ENCODE measurements at regions of chr17 and their contacts with region 1.

Region 1: DNA sequence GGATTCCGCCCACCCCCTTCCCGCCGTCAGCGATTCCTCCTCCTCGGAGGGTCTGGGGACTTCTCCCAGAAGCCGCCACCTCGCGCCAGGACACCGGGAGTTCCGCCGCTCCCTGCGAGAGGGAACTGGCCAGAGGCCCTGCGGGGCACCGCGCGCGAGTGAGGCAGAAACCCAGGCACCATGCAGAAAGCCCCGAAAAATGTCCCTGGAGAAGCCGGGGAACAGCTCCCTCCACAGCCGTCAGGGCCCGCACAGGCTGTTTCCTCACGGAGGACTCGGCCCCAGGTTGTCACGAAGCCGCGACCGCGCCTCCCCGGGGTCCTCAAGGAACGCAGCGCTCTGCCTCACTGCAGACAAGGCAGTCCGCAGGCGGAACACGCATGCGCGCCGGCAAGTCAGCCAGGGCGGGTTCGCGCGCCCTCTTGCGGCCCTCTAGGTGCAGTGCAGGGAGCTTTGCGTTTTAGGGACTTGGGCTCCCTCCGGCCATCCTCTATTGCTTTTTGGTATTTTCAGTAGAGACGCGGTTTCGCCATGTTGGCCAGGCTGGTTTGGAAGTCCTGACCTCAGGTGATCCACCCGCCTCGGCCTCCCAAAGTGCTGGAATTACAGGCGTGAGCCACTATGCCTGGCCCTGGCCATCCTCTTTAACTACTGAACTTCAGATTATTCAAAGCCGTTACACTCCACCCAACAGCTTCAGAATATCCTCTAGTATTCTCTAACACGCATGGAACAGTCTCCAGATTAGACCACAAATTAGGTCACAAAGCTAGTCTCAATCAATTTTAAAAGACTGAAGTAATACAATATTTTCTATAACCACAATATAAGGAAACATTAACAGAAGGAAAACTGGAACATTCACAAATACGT is 20.3 kb upstream of the ZNF287 start:
- DNase-seq: peak; percentile 92 to 95
- ATAC-seq: peak; percentile 93 to 95 (median 94)
- H3K4me3 ChIP-seq: peak overlapping the region; percentile 75
- H3K27ac ChIP-seq: no peak overlapping the region
- H3K4me1 ChIP-seq: no peaks in the 10 kb centered on the region
- H3K27me3 ChIP-seq: peaks cover 0 to 15% (median 2%) of the 10 kb centered on the region in 3 donors
- CTCF ChIP-seq: peak; percentile 99

Region 2: DNA sequence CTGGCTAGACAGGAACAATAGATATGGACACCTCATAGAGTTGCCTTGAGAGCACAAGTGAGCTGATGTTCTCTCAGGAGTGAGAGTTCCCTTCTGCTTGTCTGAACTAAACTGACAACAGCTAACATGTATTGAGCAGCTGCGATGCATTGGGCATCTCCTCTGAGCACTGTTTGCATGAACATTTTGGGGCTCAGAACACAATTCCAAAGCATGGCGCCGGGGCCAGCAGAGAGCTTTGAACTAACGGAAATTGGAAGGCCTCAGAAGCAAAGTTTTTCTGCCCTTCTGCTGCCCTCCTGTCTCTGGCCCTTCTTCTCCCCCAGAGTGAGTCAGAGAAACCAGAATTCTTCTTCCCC is 135.9 kb before region 1 on chr17:
- intact Hi-C with region 1: loop called in 1 of 2 experiments (anchors 5 kb)
- DNase-seq: no peak
- ATAC-seq: no peak
- H3K4me3 ChIP-seq: no peak overlapping the region
- H3K27ac ChIP-seq: no peak overlapping the region
- H3K4me1 ChIP-seq: no peaks in the 10 kb centered on the region
- H3K27me3 ChIP-seq: no peaks in the 10 kb centered on the region
- CTCF ChIP-seq: no peak

Region 3: DNA sequence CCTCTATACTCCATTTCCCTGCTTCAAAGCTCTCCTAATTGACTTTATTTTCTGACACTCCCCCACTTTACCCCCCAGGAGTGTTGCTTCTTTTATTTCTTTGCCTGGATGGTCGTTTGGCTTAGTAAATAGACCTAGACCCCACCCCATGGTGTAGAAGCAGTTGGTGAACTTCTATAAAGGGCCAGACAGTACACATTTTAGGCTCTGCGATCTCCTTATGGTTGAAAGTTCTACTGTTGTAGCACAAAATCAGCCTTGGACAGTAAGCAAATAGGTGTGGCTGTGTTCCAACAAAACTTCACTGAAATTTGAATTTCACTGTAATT is 52.2 kb before region 1 on chr17:
- intact Hi-C with region 1: loop called in 1 of 2 experiments (anchors 5 kb)
- DNase-seq: no peak
- ATAC-seq: no peak
- H3K4me3 ChIP-seq: no peak overlapping the region
- H3K27ac ChIP-seq: no peak overlapping the region
- H3K4me1 ChIP-seq: peaks cover 6% of the 10 kb centered on the region
- H3K27me3 ChIP-seq: peaks cover 0 to 2% (median 0%) of the 10 kb centered on the region in 3 donors
- CTCF ChIP-seq: no peak

Region 4: DNA sequence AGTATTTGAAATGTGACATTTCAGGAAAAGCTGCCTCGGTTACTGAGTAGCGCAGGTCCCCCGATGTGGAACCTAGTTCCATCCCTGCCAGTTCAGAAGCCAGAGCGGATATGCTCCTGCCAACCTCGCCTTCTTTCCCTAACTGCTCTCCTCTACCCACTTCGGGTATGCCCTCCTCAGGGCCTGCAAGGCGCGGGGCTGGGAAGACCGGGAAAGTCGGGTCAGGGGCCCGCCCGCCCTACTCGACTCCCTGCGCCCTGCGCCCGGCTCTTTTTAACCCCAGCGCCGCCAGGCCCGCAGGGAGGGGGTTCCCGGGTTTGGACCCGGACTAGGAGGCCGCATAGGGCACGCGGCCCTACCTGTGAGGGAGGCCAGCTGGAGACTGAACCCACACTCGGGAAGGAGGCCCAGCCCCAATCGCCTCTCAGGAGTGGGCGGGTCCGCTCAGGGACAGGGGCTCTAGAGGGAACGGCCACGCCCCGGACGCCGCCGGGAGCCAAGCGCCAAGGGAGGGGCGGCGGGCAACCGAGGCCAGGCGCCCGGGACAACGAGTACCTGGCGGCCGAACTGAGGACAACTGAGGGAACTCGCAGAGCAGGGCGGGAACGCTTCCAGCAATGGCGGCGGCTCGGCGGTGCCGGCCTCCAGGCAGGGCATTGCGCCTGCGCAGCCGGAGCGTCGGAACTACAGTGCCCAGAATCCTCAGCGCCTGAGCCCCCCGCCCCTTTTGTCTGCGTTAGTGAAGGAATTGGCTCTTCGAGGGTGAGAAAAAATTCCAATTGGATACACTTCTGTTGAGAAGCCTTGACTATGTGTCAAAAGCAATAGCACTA is 64.1 kb after region 1 on chr17 and contains the start of gene ZNF624:
- intact Hi-C with region 1: no loop called
- DNase-seq: peak; percentile 97 to 99
- ATAC-seq: peak; percentile 95 to 99 (median 98)
- H3K4me3 ChIP-seq: peak within 1 kb of the TSS; percentile 89
- H3K27ac ChIP-seq: peak within 1 kb of the TSS; percentile 96
- H3K4me1 ChIP-seq: peaks cover 7% of the 10 kb centered on the region
- H3K27me3 ChIP-seq: no peaks in the 10 kb centered on the region
- CTCF ChIP-seq: peak; percentile 3
- total RNA-seq, gene ZNF624: 0.62 to 2.5 (median 1.0) TPM